ENCODE measurements at regions of chr15 and their contacts with region 1.

Region 1: GRCh38 chr15:82197733-82198594 is 64.6 kb downstream of the EFL1 start:
- DNase-seq: peak; percentile 27
- ATAC-seq: peak; percentile 99
- H3K4me3 ChIP-seq: no peak overlapping the region
- H3K27ac ChIP-seq: no peak overlapping the region
- H3K4me1 ChIP-seq: no peaks in the 10 kb centered on the region
- H3K27me3 ChIP-seq: no peaks in the 10 kb centered on the region
- CTCF ChIP-seq: peak; percentile 70 to 83 (median 80); a peak in 5 of 6 replicates
- EP300 ChIP-seq: no peak
- POLR2A ChIP-seq: no peak
- RAD21 ChIP-seq: peak; percentile 79

Region 2: DNA sequence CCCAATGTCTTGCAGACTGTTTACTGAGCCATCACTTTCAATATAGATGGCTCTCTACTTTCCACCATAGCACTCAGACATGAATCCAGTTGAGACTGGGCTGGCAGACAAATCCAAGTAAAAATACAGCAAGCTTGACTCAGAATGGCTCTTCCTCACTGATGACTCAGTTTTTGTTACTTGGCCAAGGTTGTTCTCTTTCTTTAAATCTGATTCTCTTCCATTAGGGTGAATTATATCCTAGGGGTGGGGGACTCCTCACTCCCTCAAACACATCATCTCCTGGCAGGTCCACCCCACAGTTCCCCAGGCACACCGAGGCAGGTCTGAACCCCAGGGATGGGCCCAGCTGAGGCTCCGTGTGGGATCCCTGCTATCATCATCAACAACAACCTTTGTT is 310.1 kb before region 1 on chr15:
- CTCF ChIA-PET with region 1: no interaction called
- POLR2A ChIA-PET with region 1: no interaction called
- RAD21 ChIA-PET with region 1: no interaction called
- SMC1A ChIA-PET with region 1: no interaction called
- in situ Hi-C with region 1: no loop called
- intact Hi-C with region 1: no loop called
- DNase-seq: no peak
- ATAC-seq: no peak
- H3K4me3 ChIP-seq: no peak overlapping the region
- H3K27ac ChIP-seq: no peak overlapping the region
- H3K4me1 ChIP-seq: no peaks in the 10 kb centered on the region
- H3K27me3 ChIP-seq: 0 out of 4 replicates have a peak, but pooled peaks cover 0 to 2% of the 10 kb centered on the region in 2 experiments
- CTCF ChIP-seq: no peak
- EP300 ChIP-seq: no peak
- POLR2A ChIP-seq: no peak
- RAD21 ChIP-seq: no peak

Region 3: DNA sequence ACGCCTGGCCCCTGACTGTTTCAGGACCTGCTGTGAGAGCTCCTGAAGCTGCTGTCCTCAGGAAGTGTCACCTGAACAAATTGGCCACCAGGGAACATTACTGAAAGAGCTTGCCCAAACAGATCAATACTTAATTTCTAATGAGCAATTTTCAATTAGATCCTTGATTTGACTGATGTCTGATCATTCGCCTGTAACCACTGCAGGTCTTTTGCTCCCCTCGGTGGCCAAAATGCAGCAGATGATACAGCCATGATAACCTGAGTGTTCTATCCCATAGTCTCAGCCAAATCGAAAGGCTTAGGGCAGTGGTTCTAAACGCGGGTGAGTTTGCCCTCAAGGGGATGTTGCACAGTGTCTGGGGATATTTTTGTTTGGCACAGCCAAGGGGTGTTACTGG is 94.5 kb before region 1 on chr15:
- CTCF ChIA-PET with region 1: interaction called, 44 read pairs
- POLR2A ChIA-PET with region 1: no interaction called
- RAD21 ChIA-PET with region 1: interaction called, 36 read pairs
- SMC1A ChIA-PET with region 1: interaction called, 26 read pairs
- in situ Hi-C with region 1: loop called (anchors 5 kb)
- intact Hi-C with region 1: loop called (anchors 1 kb)
- DNase-seq: no peak
- ATAC-seq: no peak
- H3K4me3 ChIP-seq: no peak overlapping the region
- H3K27ac ChIP-seq: no peak overlapping the region
- H3K4me1 ChIP-seq: no peaks in the 10 kb centered on the region
- H3K27me3 ChIP-seq: 0 out of 4 replicates have a peak, but pooled peaks cover 0 to 1% of the 10 kb centered on the region in 2 experiments
- CTCF ChIP-seq: peak in 1 of 3 experiments; percentile 8; a peak in 1 of 6 replicates
- EP300 ChIP-seq: no peak
- POLR2A ChIP-seq: no peak
- RAD21 ChIP-seq: 0 out of 2 replicates have a peak, but pooled peaks have one; percentile 7

Region 4: DNA sequence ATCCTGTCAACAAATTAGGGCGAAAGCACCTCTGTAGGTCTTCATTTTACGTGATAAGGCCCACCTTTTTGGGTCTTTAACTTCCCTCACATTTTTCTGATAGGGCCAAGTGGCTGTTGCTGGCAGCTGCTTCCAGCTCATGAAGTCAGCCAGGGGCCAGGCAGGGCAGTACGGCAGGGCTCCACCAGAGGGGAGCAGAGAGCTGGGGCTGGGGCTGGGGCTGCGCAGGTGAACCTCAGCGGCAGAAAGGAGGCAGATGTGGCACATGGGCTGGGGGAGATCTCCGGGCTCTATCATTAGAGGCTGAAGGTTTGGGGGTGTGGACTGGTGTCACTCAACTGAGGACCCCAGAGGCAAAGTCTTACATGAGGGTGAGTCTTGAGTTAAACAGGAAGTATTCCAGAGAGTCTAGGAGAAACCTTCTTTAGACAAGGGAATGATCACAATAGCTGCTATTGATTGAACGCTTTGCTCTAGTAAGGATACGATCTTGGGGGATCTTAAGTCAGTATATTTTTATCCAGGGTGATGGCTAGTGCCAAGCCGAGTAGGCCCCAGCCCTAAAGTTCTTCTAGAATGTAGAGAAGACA is 89.4 kb before region 1 on chr15:
- CTCF ChIA-PET with region 1: interaction called, 44 read pairs
- POLR2A ChIA-PET with region 1: no interaction called
- RAD21 ChIA-PET with region 1: interaction called, 36 read pairs
- SMC1A ChIA-PET with region 1: interaction called, 26 read pairs
- in situ Hi-C with region 1: loop called (anchors 5 kb)
- intact Hi-C with region 1: loop called (anchors 1 kb)
- DNase-seq: no peak
- ATAC-seq: peak; percentile 99
- H3K4me3 ChIP-seq: no peak overlapping the region
- H3K27ac ChIP-seq: no peak overlapping the region
- H3K4me1 ChIP-seq: no peaks in the 10 kb centered on the region
- H3K27me3 ChIP-seq: no peaks in the 10 kb centered on the region; a peak in 1 of 4 replicates
- CTCF ChIP-seq: peak; percentile 91 to 96 (median 93)
- EP300 ChIP-seq: no peak
- POLR2A ChIP-seq: no peak
- RAD21 ChIP-seq: peak; percentile 82

Region 5: GRCh38 chr15:82122746-82123400 is 75.1 kb before region 1 on chr15:
- CTCF ChIA-PET with region 1: interaction called, 11 read pairs
- POLR2A ChIA-PET with region 1: no interaction called
- RAD21 ChIA-PET with region 1: no interaction called
- SMC1A ChIA-PET with region 1: interaction called, 3 read pairs
- in situ Hi-C with region 1: no loop called
- intact Hi-C with region 1: no loop called
- DNase-seq: no peak
- ATAC-seq: no peak
- H3K4me3 ChIP-seq: no peak overlapping the region
- H3K27ac ChIP-seq: no peak overlapping the region
- H3K4me1 ChIP-seq: no peaks in the 10 kb centered on the region
- H3K27me3 ChIP-seq: no peaks in the 10 kb centered on the region
- CTCF ChIP-seq: no peak
- EP300 ChIP-seq: no peak
- POLR2A ChIP-seq: no peak
- RAD21 ChIP-seq: no peak